Posterior vena cava (tissue), 2 donors: ENCODE measurements at regions of chr7 and their contacts with region 1.

Region 1: GRCh38 chr7:85041605-85042216 is 145.1 kb downstream of the SEMA3D start:
- DNase-seq: peak; percentile 80

Region 2: GRCh38 chr7:85186521-85187241 is 145.0 kb after region 1 on chr7 and contains the start of gene SEMA3D:
- intact Hi-C with region 1: loop called (anchors 5 kb)
- DNase-seq: peak; percentile 94
- total RNA-seq, gene SEMA3D: 19.8 to 21.4 TPM

Region 3: GRCh38 chr7:85215098-85215497 is 173.4 kb after region 1 on chr7:
- intact Hi-C with region 1: no loop called
- DNase-seq: no peak

Region 4: GRCh38 chr7:85343484-85343883 is 301.8 kb after region 1 on chr7:
- intact Hi-C with region 1: loop called in 1 of 2 experiments (anchors 5 kb)
- DNase-seq: no peak